ENCODE measurements at regions of chr3 and their contacts with region 1.

Region 1: DNA sequence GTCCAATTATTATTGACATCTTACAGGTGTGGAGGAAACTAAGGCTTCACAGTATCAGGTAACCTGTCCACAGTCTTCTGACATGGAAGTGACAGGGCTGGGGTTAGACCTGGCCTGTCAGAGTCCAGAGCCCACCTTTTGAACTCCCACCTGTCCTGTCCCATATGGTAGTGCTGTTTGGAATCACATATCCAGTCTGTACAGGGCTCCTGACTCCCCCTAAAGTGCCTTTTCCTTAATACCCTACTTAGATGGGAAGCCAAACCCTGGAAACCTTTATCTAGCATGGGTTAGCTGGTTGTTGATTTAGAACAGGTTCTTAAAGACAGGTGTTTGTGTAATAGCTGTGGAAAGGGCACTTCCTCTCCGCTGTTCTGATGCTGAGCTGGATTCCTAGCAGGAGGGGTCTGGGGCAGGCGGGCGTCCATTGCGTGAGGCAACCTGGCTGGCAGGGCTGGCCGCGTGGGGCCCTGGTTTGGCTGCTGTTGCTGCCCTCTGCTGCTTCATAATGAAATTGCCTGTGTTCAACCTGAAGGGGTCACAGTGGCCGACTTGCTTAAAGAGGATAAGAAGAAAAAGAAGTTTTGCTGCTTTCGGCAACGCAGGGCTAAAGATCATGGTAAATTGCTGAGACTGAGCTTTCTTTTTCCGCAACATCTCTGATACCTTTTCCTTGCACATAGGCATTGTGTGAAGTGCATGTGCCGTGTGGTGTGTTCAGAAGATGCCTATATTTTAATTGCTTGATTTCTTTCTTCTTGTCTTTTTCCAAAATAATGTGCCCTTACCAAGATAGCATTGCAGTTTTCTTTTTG is 136.2 kb downstream of the CHDH start:
- H3K4me3 Mint-ChIP-seq: no peak overlapping the region
- H3K27ac Mint-ChIP-seq: peak overlapping the region; percentile 41
- H3K4me1 Mint-ChIP-seq: peaks cover 48% of the 10 kb centered on the region
- H3K27me3 Mint-ChIP-seq: peaks cover 5% of the 10 kb centered on the region

Region 2: GRCh38 chr3:53744351-53744750 is 34.3 kb after region 1 on chr3:
- intact Hi-C with region 1: no loop called
- H3K4me3 Mint-ChIP-seq: peak overlapping the region; percentile 38
- H3K27ac Mint-ChIP-seq: peak overlapping the region; percentile 61
- H3K4me1 Mint-ChIP-seq: peaks cover 56% of the 10 kb centered on the region
- H3K27me3 Mint-ChIP-seq: peaks cover 2% of the 10 kb centered on the region

Region 3: GRCh38 chr3:53850895-53851294 is 140.8 kb after region 1 on chr3:
- intact Hi-C with region 1: loop called (anchors 10 kb)
- H3K4me3 Mint-ChIP-seq: no peak overlapping the region
- H3K27ac Mint-ChIP-seq: peak overlapping the region; percentile 21
- H3K4me1 Mint-ChIP-seq: peaks cover 13% of the 10 kb centered on the region
- H3K27me3 Mint-ChIP-seq: peaks cover 57% of the 10 kb centered on the region